Left ventricle myocardium inferior (tissue), 1 donor: ENCODE measurements at regions of chr13 and their contacts with region 1.

Region 1: DNA sequence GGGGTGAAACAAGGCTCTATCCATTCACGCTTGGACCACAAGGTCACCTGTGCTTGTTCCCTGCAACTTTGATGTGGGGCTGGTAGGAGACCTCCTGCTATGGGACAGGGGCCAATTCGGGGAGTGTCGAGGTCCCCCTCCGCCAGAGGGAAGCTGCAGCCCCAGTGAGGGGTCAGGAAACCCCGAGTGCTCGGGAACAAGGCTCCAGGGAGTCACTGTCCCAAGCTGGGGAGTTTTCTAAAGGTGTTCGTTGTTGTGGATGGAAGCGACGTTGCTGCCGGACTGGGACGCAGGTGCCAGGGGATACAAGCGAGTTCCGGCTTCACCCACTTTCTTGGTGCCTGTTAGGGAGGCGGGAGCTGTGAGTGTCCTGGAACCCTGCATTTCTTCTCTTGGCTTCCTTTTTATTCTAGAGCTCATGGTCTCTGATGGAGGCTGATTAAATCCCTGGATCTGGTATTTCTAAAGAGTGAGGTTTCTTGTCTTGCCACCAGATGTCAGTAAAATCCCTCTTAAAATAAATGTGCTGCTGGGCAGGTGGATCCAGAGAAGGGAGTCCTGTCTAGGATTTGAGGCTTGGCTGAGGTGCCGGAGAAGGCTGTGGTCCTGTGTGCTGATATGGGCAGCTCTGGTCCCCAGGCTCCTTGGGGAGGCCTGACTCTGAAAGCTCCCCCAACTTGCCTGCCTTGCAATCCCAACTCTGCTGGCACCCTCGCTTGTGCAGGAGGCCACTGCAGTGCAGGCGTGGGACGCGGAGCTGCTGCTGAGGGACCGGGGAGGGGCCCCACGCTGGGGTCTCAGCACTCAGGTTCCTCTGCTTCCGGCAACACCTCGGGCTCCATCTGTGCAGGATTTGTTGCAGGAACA is 153.9 kb downstream of the TEX29 start:
- DNase-seq: no peak
- H3K4me3 ChIP-seq: no peak overlapping the region
- H3K27ac ChIP-seq: no peak overlapping the region
- H3K4me1 ChIP-seq: no peaks in the 10 kb centered on the region
- H3K27me3 ChIP-seq: peaks cover 63% of the 10 kb centered on the region
- CTCF ChIP-seq: peak; percentile 72

Region 2: DNA sequence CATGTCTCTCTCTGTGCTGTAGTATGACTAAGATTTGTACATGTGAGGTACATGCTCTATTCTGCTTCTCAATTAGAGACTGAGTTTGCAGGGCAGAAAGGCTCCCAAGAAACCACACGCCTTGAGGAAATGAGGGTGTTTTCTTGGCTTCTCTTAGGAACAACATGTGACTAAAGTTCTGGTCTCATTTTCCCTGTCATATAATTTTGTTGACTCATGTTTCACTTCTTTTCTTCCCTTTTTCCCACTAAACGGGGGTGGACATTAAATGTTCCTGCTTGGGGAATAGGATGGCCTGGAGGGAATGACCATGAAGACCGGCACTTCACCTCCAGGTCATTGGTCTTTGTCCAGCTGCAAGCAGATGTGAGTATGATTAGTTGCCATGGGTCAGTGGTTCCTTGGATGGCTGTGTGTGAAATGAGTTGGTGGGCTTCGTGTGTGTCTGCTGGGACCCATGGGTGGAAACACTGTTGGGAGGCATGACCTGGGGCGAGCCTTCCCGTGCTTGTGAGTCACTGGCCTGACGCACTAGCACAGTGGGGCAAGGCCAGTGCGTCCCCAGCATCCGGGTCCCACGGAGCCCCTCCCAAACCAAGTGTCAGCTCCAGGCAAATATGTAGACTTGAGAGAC is 1224.0 kb before region 1 on chr13:
- intact Hi-C with region 1: no loop called
- DNase-seq: peak; percentile 71
- H3K4me3 ChIP-seq: no peak overlapping the region
- H3K27ac ChIP-seq: peak overlapping the region; percentile 92
- H3K4me1 ChIP-seq: peaks cover 78% of the 10 kb centered on the region
- H3K27me3 ChIP-seq: no peaks in the 10 kb centered on the region
- CTCF ChIP-seq: no peak

Region 3: DNA sequence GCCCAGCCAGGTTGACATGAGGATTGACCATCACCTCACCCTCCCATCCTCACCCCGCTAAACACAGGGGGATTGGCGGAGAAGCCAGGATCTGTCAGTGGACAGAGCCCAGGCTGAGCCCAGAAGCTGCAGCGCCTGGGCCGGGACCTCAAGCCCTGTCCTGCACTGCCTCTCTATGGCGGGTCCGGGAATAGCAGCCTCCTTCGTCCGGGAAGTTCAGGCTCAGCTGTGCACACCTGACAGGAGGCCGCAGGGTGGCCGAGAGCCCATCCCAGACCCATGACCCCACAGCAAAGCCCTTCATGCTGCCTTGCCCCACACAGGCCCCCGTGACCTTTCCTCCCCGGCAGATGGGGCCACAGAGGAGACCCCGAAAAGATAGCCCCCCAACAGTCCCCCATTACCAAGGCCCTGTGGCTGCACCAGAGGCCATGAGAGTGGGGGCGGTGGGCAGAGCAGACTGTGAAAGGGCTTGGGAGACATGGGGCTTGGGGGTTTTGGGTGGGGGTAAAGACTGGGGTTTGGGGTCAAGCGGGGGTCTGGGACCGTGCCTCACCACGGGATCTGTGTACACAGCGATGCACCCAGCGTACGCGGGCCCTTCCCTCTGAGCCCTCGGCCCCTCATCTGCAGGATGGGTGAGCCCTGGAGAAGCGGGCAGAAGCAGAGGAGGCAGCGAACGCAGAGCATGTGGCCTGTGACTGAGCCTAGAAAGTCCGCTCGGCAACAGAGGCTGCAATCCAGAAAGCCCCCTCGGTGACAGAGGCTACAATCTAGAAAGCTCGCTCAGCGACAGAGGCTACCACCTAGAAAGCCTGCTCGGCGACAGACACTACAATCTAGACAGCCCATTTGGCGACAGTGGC is 969.9 kb after region 1 on chr13:
- intact Hi-C with region 1: loop called (anchors 5 kb)
- DNase-seq: peak; percentile 49
- H3K4me3 ChIP-seq: no peak overlapping the region
- H3K27ac ChIP-seq: no peak overlapping the region
- H3K4me1 ChIP-seq: peaks cover 5% of the 10 kb centered on the region
- H3K27me3 ChIP-seq: peaks cover 96% of the 10 kb centered on the region
- CTCF ChIP-seq: peak; percentile 87

Region 4: DNA sequence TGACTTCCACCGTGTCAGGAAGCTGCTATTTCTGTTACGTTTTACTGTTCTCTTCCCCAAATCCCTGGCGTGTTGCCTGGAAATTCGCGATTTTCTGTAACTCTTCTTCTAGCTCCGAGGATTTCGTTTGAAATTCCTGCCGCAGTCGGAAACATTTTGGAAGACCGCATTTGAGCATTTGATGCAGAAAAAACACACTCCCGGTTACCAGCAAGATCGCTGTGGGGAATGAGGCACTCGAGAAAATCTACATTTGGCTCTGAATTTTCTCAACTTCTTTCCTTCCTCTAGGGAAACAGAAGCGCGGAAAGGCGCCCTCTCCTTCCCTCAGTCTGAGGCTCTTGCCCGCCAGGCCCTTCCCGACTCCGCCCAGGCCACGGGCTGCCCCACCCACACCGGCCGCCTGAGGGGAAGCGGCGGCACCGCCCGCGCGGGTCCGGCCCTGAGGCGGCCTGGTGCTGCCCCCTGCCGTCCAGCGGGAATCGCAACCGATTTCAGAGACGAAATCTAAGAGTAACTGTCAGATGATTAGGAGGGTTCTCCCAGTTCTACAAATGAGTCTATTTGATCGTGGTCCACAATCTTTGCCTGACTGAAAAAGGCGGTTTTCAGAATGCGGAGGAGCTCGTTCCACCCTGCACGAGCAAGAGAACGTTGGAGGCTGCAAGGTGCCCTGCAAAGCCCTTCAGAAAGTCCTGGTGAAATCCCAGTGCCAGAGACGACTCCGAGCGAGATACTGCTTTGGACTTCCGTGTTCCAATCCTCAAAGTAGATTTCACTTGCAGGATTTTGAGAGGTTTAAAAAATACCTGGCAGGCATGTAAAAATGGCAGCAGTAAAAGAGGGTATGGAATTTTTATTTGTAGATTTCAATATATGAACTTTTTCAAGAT is 1132.0 kb after region 1 on chr13:
- intact Hi-C with region 1: loop called (anchors 10 kb)
- DNase-seq: peak; percentile 93
- H3K4me3 ChIP-seq: peak overlapping the region; percentile 62
- H3K27ac ChIP-seq: peak overlapping the region; percentile 57
- H3K4me1 ChIP-seq: peaks cover 11% of the 10 kb centered on the region
- H3K27me3 ChIP-seq: peaks cover under 1% of the 10 kb centered on the region
- CTCF ChIP-seq: peak; percentile 97